ENCODE measurements at regions of chr12 and their contacts with region 1.

Region 1: DNA sequence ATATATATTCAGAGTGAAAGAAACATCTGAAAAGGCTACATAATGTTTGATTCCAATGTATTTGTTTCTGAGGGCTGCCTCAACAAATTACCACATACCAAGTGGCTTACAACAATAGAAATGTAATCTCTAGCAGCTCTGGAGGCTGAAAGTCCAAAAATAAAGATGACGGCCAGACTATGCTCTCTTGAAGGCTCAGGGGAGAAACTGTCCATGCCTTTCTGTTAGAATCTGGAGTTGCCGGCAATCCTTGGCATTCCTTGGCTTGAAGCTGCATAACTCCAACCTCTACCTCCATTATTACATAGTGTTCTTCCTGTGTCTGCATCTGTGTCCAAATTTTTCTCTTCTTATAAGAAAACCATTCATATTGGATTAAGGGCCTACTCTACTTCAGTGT is 68.1 kb upstream of the PLEKHG7 start:
- DNase-seq: no peak
- H3K4me3 ChIP-seq: no peak overlapping the region
- CTCF ChIP-seq: no peak

Region 2: GRCh38 chr12:92649511-92650227 is 14.9 kb after region 1 on chr12:
- CTCF ChIA-PET with region 1: interaction called, 22 read pairs
- POLR2A ChIA-PET with region 1: no interaction called
- DNase-seq: peak; percentile 60
- H3K4me3 ChIP-seq: no peak overlapping the region
- CTCF ChIP-seq: peak; percentile 74

Region 3: GRCh38 chr12:92899388-92900001 is 264.8 kb after region 1 on chr12:
- CTCF ChIA-PET with region 1: no interaction called
- POLR2A ChIA-PET with region 1: no interaction called
- DNase-seq: peak; percentile 97
- H3K4me3 ChIP-seq: peak overlapping the region; percentile 40
- CTCF ChIP-seq: no peak

Measured in AG04449 (cell line).